ENCODE measurements at regions of chr19 and their contacts with region 1.

Region 1: GRCh38 chr19:35213663-35214632 is 14.6 kb downstream of the FAM187B start:
- DNase-seq: peak; percentile 53 to 97 (median 78)
- ATAC-seq: peak; percentile 40
- H3K4me3 ChIP-seq: peak overlapping the region; percentile 16
- H3K4me3 Mint-ChIP-seq: peak overlapping the region; percentile 28
- H3K27ac ChIP-seq: peak overlapping the region; percentile 95 to 96
- H3K27ac Mint-ChIP-seq: peak overlapping the region; percentile 99
- H3K4me1 ChIP-seq: peaks cover 79% of the 10 kb centered on the region
- H3K4me1 Mint-ChIP-seq: peaks cover 71% of the 10 kb centered on the region
- H3K27me3 ChIP-seq: no peaks in the 10 kb centered on the region
- H3K27me3 Mint-ChIP-seq: no peaks in the 10 kb centered on the region
- CTCF ChIP-seq: no peak

Region 2: GRCh38 chr19:35066691-35067563 is 147.0 kb before region 1 on chr19:
- CTCF ChIA-PET with region 1: interaction called, 3 read pairs
- POLR2A ChIA-PET with region 1: no interaction called
- intact Hi-C with region 1: loop called (anchors 1 to 5 kb)
- DNase-seq: peak; percentile 83 to 94 (median 88)
- ATAC-seq: peak; percentile 95
- H3K4me3 ChIP-seq: no peak overlapping the region
- H3K4me3 Mint-ChIP-seq: no peak overlapping the region
- H3K27ac ChIP-seq: no peak overlapping the region
- H3K27ac Mint-ChIP-seq: no peak overlapping the region
- H3K4me1 ChIP-seq: peaks cover 8% of the 10 kb centered on the region
- H3K4me1 Mint-ChIP-seq: peaks cover 8% of the 10 kb centered on the region
- H3K27me3 ChIP-seq: peaks cover 0 to 5% of the 10 kb centered on the region in 2 experiments
- H3K27me3 Mint-ChIP-seq: no peaks in the 10 kb centered on the region
- CTCF ChIP-seq: peak; percentile 87

Region 3: GRCh38 chr19:35149463-35149862 is 64.5 kb before region 1 on chr19:
- CTCF ChIA-PET with region 1: interaction called, 13 read pairs
- POLR2A ChIA-PET with region 1: interaction called, 56 read pairs
- intact Hi-C with region 1: loop called (anchors 1 to 2 kb)
- DNase-seq: no peak
- ATAC-seq: no peak
- H3K4me3 ChIP-seq: no peak overlapping the region
- H3K4me3 Mint-ChIP-seq: no peak overlapping the region
- H3K27ac ChIP-seq: no peak overlapping the region
- H3K27ac Mint-ChIP-seq: no peak overlapping the region
- H3K4me1 ChIP-seq: peaks cover 22% of the 10 kb centered on the region
- H3K4me1 Mint-ChIP-seq: peaks cover 33% of the 10 kb centered on the region
- H3K27me3 ChIP-seq: no peaks in the 10 kb centered on the region
- H3K27me3 Mint-ChIP-seq: no peaks in the 10 kb centered on the region
- CTCF ChIP-seq: no peak

Region 4: DNA sequence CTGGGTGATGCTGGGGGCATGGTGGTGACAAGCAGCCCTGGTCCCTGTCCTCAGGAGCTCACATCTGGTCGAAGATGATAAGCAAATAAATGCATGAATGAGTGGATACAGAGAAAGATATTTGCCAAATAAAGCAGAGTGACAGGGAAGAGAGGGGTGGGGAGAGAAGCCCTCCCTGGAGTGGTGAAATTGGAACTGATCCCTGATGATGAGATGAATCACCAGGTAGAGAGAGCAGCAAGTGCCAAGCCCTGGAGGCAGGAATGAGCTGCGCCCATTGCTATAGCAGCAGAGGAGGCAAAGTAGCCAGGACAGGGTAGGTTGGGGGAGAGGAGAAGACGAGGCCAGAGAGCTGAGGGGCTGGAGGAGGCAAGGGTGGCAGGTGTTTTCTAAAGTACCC is 45.7 kb before region 1 on chr19:
- CTCF ChIA-PET with region 1: no interaction called
- POLR2A ChIA-PET with region 1: interaction called, 21 read pairs
- intact Hi-C with region 1: no loop called
- DNase-seq: no peak
- ATAC-seq: no peak
- H3K4me3 ChIP-seq: no peak overlapping the region
- H3K4me3 Mint-ChIP-seq: no peak overlapping the region
- H3K27ac ChIP-seq: peak overlapping the region; percentile 50 to 68
- H3K27ac Mint-ChIP-seq: peak overlapping the region; percentile 91
- H3K4me1 ChIP-seq: peaks cover 69% of the 10 kb centered on the region
- H3K4me1 Mint-ChIP-seq: peaks cover 68% of the 10 kb centered on the region
- H3K27me3 ChIP-seq: no peaks in the 10 kb centered on the region
- H3K27me3 Mint-ChIP-seq: no peaks in the 10 kb centered on the region
- CTCF ChIP-seq: no peak

Region 5: DNA sequence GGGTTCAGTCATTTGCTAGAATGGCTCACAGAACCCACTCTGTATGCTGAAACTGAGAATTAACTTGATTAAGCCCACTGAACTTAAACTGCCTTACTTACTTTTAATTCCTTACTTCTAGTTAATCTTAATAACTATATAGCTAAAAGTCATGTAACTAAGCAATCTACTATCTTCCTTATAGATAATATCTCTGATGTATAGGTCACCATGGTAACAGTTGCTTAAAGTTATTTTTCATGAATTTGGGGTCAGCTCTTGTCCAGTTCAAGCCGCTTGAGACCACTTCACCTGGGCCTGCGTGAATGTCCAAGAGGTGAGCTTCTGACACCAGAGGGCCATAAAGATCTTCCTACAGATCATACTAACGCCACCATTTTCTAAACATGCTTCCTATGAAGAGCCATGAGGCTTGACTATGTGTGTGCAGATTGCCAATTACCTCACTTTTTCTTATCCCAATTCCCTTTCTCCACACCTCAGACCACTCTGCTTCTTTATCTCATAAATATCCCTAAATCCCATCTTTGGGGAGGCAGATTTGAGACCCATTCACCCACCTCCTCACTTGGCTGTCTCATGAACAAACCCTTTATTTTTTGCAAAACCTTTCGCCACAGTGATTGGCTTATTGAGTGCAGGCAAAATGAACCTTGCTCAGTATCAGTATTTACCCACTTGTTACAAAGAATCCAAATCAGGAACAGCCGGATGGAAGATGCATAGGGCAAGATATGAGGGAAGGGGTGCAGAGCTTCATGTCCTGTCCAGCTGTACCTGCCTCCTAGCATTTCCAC is 19.9 kb before region 1 on chr19:
- CTCF ChIA-PET with region 1: interaction called, 3 read pairs
- POLR2A ChIA-PET with region 1: interaction called, 12 read pairs
- intact Hi-C with region 1: no loop called
- DNase-seq: no peak
- ATAC-seq: no peak
- H3K4me3 ChIP-seq: no peak overlapping the region
- H3K4me3 Mint-ChIP-seq: no peak overlapping the region
- H3K27ac ChIP-seq: no peak overlapping the region
- H3K27ac Mint-ChIP-seq: no peak overlapping the region
- H3K4me1 ChIP-seq: peaks cover 5% of the 10 kb centered on the region
- H3K4me1 Mint-ChIP-seq: peaks cover 16% of the 10 kb centered on the region
- H3K27me3 ChIP-seq: no peaks in the 10 kb centered on the region
- H3K27me3 Mint-ChIP-seq: no peaks in the 10 kb centered on the region
- CTCF ChIP-seq: peak; percentile 27

Region 6: DNA sequence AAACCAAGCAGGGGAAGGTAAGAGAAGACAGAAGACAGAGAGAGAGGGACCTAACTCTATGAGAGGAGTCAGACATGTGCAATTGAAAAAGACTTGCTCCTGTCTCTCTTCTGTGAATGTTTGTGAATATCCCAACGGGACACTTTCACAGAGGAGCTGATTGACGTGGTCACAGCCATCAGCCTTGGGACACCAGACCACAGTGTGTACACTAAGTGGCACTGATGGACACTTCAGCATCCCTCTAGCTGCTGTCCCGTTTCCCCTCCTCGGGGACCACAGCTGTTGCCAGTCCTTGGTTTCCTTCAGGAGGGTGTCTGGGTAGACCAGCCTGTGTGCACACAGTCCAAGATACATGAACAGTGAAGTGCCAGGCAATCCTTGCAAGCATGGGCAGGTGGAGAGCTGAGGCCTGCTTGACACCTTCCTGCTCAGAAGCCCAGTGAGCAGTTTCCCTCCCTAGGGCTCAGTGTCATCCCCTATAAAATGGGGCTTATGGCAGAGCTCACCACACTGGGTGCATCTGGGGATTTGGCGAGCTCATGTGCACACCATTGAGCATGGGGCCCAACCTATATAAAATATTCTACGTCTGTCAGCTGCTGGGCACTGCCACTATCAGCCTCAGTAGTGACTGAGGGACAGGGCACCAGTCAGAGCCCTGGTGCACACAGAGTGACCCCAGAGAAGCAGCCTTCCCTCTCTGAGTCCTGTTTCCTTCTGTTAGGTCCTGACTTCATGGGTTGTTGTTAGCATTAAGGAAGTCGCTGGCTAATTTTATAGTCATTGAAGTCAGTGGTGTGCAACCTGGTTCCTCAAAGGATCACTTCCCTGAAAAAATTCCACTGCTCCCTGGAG is 50.5 kb after region 1 on chr19:
- CTCF ChIA-PET with region 1: no interaction called
- POLR2A ChIA-PET with region 1: interaction called, 27 read pairs
- intact Hi-C with region 1: loop called (anchors 5 to 10 kb)
- DNase-seq: peak in 1 of 14 experiments; percentile 31
- ATAC-seq: no peak
- H3K4me3 ChIP-seq: no peak overlapping the region
- H3K4me3 Mint-ChIP-seq: peak overlapping the region; percentile 87
- H3K27ac ChIP-seq: no peak overlapping the region
- H3K27ac Mint-ChIP-seq: peak overlapping the region; percentile 92
- H3K4me1 ChIP-seq: peaks cover 33% of the 10 kb centered on the region
- H3K4me1 Mint-ChIP-seq: peaks cover 20% of the 10 kb centered on the region
- H3K27me3 ChIP-seq: no peaks in the 10 kb centered on the region
- H3K27me3 Mint-ChIP-seq: no peaks in the 10 kb centered on the region
- CTCF ChIP-seq: no peak